Gastrocnemius medialis (tissue), 4 donors: ENCODE measurements at regions of chr1 and their contacts with region 1.

Region 1: DNA sequence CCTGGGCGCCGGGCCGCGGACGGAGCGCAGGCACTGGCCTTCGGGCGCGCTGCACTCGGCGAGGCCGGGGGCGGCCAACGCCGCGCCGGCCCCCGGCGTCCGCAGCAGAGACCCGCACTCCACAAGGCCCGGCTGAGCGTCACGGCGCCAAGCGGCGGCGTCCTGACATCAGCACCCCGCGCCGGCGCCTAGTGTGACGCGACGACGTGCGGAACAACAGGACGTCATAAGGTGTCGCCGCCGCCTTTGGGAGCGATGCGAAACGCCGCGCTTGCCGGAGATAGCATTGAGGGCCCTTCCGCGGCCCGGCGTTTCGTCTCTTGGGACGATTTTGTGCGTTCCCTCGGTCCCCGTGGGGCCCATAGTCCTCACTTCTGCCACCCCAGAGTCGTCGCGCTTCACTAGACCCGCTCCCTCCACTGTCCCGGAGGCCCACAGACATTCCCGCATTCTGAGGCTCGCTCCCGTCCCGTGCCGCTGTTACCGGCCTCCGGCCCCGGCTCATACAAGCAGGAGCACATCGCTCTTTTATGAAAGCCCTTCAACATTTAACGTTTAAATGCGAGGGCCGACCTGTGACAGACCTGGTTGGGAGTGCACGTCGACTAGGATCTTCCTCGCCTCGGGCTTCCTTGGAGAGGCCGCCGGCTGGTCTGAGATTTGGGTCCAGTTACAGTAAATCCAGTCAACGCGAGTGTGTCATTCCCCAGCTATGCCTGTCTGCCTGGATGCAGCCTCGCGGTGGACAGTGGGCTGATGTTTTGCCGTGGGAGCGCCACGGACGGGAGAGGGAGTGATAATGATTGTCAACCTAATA is at the start of gene SSU72:
- DNase-seq: peak; percentile 82 to 92
- ATAC-seq: peak; percentile 96
- H3K4me3 ChIP-seq: peak within 1 kb of the TSS; percentile 89 to 98 (median 96)
- H3K27ac ChIP-seq: peak within 1 kb of the TSS; percentile 97 to 99 (median 98)
- H3K4me1 ChIP-seq: peaks cover 33% of the 10 kb centered on the region in 2 donors
- H3K27me3 ChIP-seq: no peaks in the 10 kb centered on the region
- CTCF ChIP-seq: peak in 2 of 5 experiments; percentile 47 to 66
- POLR2A ChIP-seq: peak; percentile 91 to 96
- total RNA-seq, gene SSU72: 141 to 235 (median 208) TPM

Region 2: DNA sequence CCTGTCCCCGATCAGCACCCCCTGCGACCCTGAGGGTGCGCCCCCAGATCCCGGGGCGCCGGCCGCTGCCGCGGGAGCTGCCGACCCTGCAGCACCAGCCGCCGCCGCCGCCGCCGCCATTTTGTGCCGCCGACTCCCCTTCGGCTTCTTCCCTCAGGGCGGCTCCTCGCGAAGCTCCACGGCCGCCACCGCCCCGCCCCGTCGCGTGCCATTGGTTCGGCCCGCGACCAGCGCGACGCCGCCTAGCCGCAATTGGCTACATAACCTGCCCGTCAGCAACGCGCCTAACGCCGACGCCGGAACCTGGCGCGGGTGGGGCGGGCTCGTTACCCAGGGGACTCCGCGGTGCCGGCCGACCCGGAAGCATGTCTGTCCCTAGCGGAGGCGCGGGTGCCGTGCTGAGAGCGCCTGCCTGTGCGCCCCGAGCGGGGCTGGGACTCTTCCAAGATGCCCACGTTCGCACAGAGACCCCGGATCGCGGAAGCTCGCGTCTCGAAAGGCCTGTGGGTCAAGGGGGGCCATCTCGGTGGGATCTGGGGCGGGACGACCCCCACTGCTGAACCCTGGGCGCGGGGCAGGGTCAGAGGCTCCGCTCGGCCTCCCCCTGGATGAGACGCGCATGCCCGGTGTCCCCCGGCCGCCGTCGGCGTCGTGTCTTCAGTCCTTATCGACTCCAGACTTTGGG is 175.6 kb before region 1 on chr1 and contains the start of gene CCNL2:
- in situ Hi-C with region 1: no loop called
- intact Hi-C with region 1: loop called (anchors 2 kb)
- DNase-seq: peak; percentile 96 to 98
- ATAC-seq: peak; percentile 89 to 93
- H3K4me3 ChIP-seq: peak within 1 kb of the TSS; percentile 65 to 98 (median 84)
- H3K27ac ChIP-seq: peak within 1 kb of the TSS; percentile 80 to 96 (median 92)
- H3K4me1 ChIP-seq: peaks cover 37 to 39% of the 10 kb centered on the region in 2 donors
- H3K27me3 ChIP-seq: no peaks in the 10 kb centered on the region
- CTCF ChIP-seq: peak; percentile 80 to 82 (median 82)
- POLR2A ChIP-seq: peak; percentile 81 to 89
- total RNA-seq, gene CCNL2: 35.0 to 91.1 (median 43.7) TPM

Region 3: GRCh38 chr1:1511533-1512285 is 63.2 kb before region 1 on chr1 and contains the start of gene ATAD3A:
- in situ Hi-C with region 1: no loop called
- intact Hi-C with region 1: loop called (anchors 1 kb)
- DNase-seq: peak; percentile 97 to 98
- ATAC-seq: peak; percentile 92 to 93
- H3K4me3 ChIP-seq: peak within 1 kb of the TSS; percentile 81 to 99 (median 94)
- H3K27ac ChIP-seq: peak within 1 kb of the TSS; percentile 93 to 100 (median 96)
- H3K4me1 ChIP-seq: peaks cover 6 to 13% of the 10 kb centered on the region in 2 donors
- H3K27me3 ChIP-seq: no peaks in the 10 kb centered on the region
- CTCF ChIP-seq: peak in 3 of 5 experiments; percentile 9 to 46 (median 27)
- POLR2A ChIP-seq: peak; percentile 84 to 91
- total RNA-seq, gene ATAD3A: 22.9 to 47.9 (median 35.6) TPM

Region 4: DNA sequence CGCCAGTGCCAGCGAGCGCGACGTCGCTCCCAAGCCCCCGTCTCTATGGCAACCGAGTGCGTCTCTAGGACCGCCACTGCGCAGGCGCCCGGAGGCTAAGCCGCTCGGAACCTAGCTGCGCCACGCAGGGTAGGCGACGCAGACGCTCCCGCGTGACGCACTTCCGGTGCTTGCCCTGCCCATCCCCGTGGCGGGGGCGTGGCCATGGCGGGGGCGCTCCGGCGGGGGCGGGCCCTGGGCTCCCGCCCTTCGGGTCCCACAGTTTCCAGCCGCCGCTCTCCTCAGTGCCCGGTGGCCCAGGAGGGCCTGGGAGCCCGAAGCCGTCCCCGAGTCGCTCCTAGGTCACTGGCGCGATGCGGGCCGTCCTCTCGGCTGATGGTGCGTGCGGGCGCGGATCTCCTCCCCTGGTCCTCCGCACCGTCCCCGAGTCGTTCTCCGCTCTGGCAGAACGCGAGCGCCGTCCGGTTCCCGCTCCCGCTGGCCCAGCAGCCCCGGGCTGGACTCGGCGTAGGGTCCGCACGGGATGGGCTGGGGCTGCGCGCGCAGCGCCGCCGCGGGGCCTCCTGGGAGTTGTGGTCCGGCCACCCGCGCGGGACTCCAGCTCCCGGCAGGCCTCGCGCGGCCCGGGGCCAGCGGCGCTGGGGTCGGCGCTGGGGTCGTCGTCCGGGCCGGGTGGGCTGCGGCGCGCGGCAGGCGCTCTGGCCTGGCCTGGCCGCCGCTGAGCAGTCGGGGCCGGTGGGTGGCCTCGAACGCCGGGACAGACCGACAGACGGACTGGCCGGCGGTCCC is 40.5 kb after region 1 on chr1 and contains the start of gene MIB2:
- in situ Hi-C with region 1: no loop called
- intact Hi-C with region 1: loop called (anchors 1 kb)
- DNase-seq: peak; percentile 91 to 92
- ATAC-seq: peak; percentile 83 to 89
- H3K4me3 ChIP-seq: peak within 1 kb of the TSS; percentile 82 to 99 (median 89)
- H3K27ac ChIP-seq: peak within 1 kb of the TSS; percentile 98 to 100 (median 100)
- H3K4me1 ChIP-seq: peaks cover 41 to 42% of the 10 kb centered on the region in 2 donors
- H3K27me3 ChIP-seq: no peaks in the 10 kb centered on the region
- CTCF ChIP-seq: peak in 1 of 5 experiments; percentile 16
- POLR2A ChIP-seq: peak; percentile 86 to 90
- total RNA-seq, gene MIB2: 66.4 to 154 (median 117) TPM

Region 5: DNA sequence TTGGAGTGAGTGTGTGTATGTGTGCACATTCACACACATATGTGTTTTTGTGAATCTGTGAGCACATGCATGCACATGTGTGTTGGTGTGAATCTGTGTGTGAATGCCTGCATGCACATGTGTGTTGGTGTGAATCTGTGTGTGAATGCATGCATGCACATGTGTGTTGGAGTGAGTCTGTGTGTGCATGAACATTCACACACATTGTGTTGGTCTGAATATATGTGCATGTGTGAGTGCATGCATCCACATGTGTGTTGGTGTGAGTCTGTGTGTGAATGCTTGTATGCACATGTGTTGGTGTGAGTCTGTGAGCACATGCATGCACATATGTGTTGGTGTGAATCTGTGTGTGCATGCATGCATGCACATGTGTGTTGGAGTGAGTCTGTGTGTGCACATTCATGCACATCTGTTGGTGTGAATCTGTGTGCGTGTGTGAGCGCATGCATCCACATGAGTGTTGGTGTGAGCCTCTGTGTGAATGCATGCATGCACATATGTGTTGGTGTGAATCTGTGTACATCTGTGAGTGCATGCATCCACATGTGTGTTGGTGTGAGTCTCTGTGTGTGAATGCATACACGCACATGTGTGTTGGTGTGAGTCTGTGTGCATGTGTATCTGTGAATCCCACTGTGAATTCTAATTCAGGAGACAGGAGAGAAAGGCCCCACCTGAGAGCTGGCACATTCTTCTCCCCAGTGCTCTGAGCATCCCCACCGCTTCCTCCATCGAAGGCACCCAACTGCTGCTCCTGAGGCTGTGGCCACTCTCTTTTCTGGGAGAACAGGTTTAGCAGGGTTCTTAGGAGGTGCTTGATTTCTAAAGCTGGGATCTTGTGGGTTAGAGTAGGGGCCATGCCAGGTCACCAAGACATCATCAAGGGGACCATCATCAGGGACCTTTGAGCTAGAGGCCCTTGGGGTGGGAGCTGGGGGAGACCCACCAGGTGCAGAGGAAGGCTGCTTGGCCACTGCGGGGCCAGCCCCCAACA is 1762.0 kb after region 1 on chr1:
- in situ Hi-C with region 1: no loop called
- intact Hi-C with region 1: no loop called
- DNase-seq: no peak
- ATAC-seq: no peak
- H3K4me3 ChIP-seq: no peak overlapping the region
- H3K27ac ChIP-seq: no peak overlapping the region
- H3K4me1 ChIP-seq: peaks cover 8% of the 10 kb centered on the region in 2 donors
- H3K27me3 ChIP-seq: peaks cover 0 to 5% (median 0%) of the 10 kb centered on the region in 3 donors
- CTCF ChIP-seq: no peak
- POLR2A ChIP-seq: no peak